ENCODE measurements at regions of chr10 and their contacts with region 1.

Region 1: DNA sequence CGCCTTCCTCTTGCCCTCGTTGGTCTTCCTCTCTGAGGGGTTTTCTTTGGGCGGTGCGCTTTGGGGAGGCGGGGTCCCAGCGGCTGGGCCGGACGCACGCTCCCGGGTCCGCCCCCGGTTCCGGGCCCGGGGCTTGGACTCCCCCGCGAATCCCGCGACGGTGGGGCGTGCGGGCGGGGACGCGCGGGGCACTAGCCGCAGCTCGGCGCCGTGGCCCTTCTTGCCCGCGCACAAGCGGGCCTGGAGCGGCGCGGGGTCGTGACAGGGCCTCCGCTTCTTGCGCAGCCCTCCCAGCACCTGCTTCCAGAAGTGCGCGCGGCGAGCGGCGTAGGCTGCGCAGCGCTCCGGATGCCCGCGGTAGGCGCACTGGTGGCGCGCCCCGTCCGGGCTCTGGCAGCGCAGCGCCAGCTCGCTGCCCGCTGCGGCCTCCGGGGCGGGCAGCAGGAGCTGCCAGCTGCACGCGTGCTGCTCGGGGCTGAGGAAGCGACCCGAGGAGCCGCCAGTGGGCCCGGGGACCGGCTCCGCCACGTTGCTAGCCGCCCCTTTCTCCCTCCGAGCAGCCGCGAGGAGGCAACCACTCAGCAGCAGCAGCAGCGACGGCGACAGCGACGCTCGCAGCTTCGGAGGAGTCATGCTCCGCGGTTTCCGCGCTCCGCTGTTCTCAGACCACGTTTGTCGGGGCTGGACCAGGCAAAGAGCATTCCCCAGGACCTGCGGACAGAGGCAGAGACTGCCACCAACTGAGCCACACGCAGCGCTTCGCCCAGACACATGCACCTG is 759 bp downstream of the FGFBP3 start:
- DNase-seq: peak; percentile 78
- ATAC-seq: peak; percentile 91
- H3K4me3 Mint-ChIP-seq: peak overlapping the region; percentile 88
- H3K27ac Mint-ChIP-seq: peak overlapping the region; percentile 86
- H3K4me1 Mint-ChIP-seq: peaks cover 23% of the 10 kb centered on the region
- H3K27me3 Mint-ChIP-seq: peaks cover 9% of the 10 kb centered on the region

Region 2: DNA sequence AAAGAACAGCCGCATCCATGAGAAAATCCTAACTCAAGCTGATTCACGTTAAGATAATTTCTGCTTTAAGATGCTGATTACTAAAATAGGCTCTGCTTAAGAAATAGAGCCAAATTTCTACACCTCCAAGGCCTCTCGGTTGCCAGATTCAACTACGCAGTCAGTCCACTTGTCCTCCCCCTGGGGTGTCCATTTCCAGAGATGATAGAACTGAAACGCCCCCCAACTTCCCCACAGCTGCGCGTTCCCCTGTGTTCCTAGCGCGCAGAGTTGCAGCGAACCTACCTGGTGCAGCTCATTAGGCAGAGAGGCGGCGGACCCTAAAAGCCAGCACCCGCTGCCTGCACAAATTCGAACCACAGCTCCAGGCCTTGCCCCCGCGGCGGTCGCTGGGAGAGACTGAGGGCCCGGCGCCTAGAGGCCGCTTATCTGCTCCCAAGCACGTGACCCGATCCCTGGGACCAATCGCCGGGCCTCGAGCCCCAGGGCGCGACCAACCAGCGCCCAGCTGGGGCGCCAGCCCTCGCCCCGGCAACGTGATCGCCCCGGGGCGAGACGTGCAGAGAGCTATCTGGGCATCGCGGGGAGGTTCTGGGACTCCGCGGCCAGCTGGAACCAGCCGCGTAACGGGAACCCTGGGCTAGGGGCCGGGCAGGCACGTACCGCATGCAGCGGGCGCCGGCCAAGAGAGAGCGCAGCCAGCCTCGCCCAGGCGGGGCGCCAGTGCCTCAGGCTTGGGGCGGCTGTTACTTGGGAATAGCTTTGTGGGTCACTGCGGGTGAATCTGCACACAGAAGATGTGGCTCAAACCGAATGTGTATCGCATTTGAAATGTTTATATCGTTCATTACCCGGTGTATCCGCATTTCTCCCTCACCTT is 275.6 kb before region 1 on chr10 and contains the start of gene PPP1R3C:
- CTCF ChIA-PET with region 1: interaction called, 19 read pairs
- POLR2A ChIA-PET with region 1: no interaction called
- DNase-seq: peak; percentile 51
- ATAC-seq: peak; percentile 87
- H3K4me3 Mint-ChIP-seq: peak within 1 kb of the TSS; percentile 67
- H3K27ac Mint-ChIP-seq: no peak within 1 kb of the TSS
- H3K4me1 Mint-ChIP-seq: peaks cover 8% of the 10 kb centered on the region
- H3K27me3 Mint-ChIP-seq: peaks cover 46% of the 10 kb centered on the region
- total RNA-seq, gene PPP1R3C: not detected

Region 3: GRCh38 chr10:91643700-91644099 is 264.8 kb before region 1 on chr10:
- CTCF ChIA-PET with region 1: no interaction called
- POLR2A ChIA-PET with region 1: no interaction called
- DNase-seq: no peak
- ATAC-seq: no peak
- H3K4me3 Mint-ChIP-seq: no peak overlapping the region
- H3K27ac Mint-ChIP-seq: no peak overlapping the region
- H3K4me1 Mint-ChIP-seq: no peaks in the 10 kb centered on the region
- H3K27me3 Mint-ChIP-seq: peaks cover 31% of the 10 kb centered on the region

Region 4: GRCh38 chr10:91758303-91759146 is 150.0 kb before region 1 on chr10:
- CTCF ChIA-PET with region 1: interaction called, 27 read pairs
- POLR2A ChIA-PET with region 1: no interaction called
- DNase-seq: no peak
- ATAC-seq: peak; percentile 58
- H3K4me3 Mint-ChIP-seq: no peak overlapping the region
- H3K27ac Mint-ChIP-seq: no peak overlapping the region
- H3K4me1 Mint-ChIP-seq: no peaks in the 10 kb centered on the region
- H3K27me3 Mint-ChIP-seq: peaks cover 37% of the 10 kb centered on the region

Region 5: DNA sequence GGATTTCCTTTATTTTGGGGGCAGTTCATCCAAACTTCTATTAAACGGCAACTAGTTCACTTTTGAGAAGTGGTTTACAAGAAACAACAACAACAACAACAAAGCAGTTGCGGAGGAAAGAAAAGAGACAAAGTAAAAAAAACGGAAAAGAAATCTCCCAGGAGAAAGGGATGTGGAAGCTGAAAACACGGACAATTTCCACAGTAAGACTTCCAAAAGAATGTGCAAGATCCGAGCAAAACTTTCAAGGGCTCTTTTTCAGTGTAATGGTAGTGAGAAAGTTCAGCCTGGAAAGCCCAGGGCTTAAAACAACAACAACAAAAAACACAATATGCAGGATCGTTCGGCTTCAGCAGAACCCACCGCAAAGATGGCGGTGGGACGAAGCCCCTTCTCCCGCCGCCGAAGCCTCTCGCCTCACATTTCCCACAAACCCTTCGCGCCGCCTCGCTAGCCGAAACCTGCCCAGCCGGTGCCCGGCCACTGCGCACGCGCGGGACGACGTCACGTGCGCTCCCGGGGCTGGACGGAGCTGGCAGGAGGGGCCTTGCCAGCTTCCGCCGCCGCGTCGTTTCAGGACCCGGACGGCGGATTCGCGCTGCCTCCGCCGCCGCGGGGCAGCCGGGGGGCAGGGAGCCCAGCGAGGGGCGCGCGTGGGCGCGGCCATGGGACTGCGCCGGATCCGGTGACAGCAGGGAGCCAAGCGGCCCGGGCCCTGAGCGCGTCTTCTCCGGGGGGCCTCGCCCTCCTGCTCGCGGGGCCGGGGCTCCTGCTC is 110.5 kb before region 1 on chr10 and contains the start of gene TNKS2:
- CTCF ChIA-PET with region 1: interaction called, 12 read pairs
- POLR2A ChIA-PET with region 1: interaction called, 4 read pairs
- DNase-seq: peak; percentile 93
- ATAC-seq: peak; percentile 87
- H3K4me3 Mint-ChIP-seq: peak within 1 kb of the TSS; percentile 97
- H3K27ac Mint-ChIP-seq: peak within 1 kb of the TSS; percentile 96
- H3K4me1 Mint-ChIP-seq: peaks cover 47% of the 10 kb centered on the region
- H3K27me3 Mint-ChIP-seq: no peaks in the 10 kb centered on the region
- total RNA-seq, gene TNKS2: 27.5 to 28.4 TPM

Region 6: DNA sequence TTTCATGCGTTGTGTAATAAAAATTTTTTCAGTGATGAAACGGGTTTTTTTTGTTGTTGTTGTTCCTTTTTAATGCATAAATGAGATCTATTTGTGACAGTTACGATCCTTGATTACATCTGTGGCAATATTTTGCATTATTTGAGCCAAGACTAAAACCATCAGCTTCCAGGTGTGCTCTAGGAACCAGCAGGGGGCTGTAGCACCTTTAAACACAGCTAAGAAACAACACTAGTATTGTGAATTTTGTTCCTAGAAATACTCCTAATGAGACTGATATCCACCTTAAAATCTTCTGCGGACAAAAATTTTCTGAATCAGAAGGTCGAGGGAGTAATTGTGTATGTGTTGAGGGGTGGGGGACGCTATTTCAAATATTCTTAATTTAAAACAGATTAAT is 51.9 kb before region 1 on chr10:
- CTCF ChIA-PET with region 1: interaction called, 11 read pairs
- POLR2A ChIA-PET with region 1: no interaction called
- DNase-seq: no peak
- ATAC-seq: no peak
- H3K4me3 Mint-ChIP-seq: no peak overlapping the region
- H3K27ac Mint-ChIP-seq: no peak overlapping the region
- H3K4me1 Mint-ChIP-seq: no peaks in the 10 kb centered on the region
- H3K27me3 Mint-ChIP-seq: no peaks in the 10 kb centered on the region

Region 7: DNA sequence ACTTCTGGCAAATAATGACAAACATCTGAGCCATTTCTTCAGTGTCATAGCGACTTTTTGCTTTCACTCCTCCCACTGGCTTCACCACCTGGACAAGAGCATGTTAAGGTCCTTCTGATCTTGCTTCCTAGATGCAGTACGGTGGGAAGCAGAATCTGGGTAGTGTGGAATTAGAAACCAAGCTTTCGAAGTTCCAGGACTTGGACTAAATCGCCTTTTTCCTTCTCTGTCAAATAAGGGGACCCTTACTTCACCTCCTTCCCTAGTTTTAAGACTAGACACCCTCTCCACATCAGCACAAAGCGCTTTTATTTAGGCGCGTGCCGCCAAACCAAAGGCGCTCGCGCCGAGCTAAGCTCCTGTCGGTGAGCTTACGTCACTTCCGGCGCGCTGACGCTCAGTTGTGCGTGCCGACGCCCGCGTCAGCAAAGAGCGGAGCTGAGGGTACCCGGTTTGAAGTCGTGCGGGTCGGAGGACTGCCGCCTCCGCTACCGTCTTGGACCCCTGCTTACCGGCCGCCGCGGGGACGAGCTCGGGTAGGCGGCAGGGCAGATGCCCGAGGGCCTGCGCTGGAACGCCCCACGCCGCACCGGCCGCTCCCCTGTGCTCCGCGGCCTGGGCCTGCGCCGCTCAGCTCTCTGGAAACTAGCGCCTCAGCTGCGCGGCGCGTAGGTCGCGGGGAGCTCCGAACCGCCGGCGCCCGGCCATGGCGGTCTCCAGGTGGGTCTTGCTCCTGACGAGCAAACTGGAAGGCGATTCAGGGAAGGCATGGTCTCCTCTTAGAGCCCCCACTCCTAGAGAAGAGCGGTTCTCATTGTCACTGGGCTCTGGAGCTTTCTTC is 15.1 kb after region 1 on chr10 and contains the start of gene BTAF1:
- CTCF ChIA-PET with region 1: interaction called, 29 read pairs
- POLR2A ChIA-PET with region 1: interaction called, 19 read pairs
- DNase-seq: peak; percentile 94
- ATAC-seq: peak; percentile 96
- H3K4me3 Mint-ChIP-seq: peak within 1 kb of the TSS; percentile 88
- H3K27ac Mint-ChIP-seq: peak within 1 kb of the TSS; percentile 99
- H3K4me1 Mint-ChIP-seq: peaks cover 35% of the 10 kb centered on the region
- H3K27me3 Mint-ChIP-seq: peaks cover 3% of the 10 kb centered on the region
- total RNA-seq, gene BTAF1: 40.9 to 41.0 TPM

Region 8: GRCh38 chr10:92031580-92031979 is 123.1 kb after region 1 on chr10:
- CTCF ChIA-PET with region 1: no interaction called
- POLR2A ChIA-PET with region 1: no interaction called
- DNase-seq: peak; percentile 35
- ATAC-seq: peak; percentile 39
- H3K4me3 Mint-ChIP-seq: no peak overlapping the region
- H3K27ac Mint-ChIP-seq: no peak overlapping the region
- H3K4me1 Mint-ChIP-seq: peaks cover 12% of the 10 kb centered on the region
- H3K27me3 Mint-ChIP-seq: no peaks in the 10 kb centered on the region